Activated T-helper 2 cell treated with anti-CD3 and anti-CD28 coated beads, Interferon-gamma antibody, Interleukin-2, Interleukin-4, amounts not matched to agents 10 μg/mL and 5 μg/mL and 100 μg/mL, durations not matched to agents 14 hours and 24 hours and 36 hours (primary cell): ENCODE measurements at regions of chr5 and their contacts with region 1.

Region 1: DNA sequence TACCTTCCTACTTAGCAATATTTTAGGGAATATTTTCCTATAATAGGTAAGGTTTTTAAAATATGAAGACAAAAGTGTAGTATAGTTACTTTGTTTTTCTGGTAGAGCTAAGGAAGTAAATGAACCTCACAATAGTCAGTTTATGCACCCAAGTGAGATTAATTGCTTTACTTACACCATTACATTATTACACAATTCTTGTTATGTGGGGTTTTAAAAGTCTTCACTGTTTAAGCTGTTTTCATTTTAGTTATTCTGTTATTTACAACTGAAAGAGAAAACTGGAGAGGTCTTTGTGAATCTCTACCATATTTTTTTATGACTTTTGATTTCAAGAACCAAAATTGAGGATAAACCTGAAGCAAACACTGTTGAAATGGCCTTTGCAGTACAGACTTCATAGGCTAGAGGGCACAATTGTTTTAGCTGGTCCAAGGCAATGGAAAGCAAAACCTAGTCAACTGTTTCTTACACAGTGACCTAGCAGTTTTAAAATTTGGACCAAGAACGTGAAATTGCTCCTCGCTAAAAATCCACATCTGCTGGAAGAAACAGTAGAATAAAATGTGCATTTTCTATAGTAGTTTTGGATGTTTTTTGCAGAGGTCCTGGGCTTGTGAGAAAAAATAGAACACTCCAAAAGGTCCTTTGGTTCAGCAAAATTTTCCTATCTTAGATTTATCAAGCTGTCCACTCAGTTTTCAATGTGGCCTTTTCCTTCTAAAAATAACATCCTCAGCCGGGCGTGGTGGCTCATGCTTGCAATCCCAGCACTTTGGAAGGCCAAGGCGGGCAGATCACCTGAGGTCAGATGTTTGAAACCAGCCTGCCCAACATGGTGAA is 66.4 kb upstream of the FER start:
- DNase-seq: no peak
- H3K4me3 Mint-ChIP-seq: no peak overlapping the region
- H3K27ac Mint-ChIP-seq: no peak overlapping the region
- H3K4me1 Mint-ChIP-seq: no peaks in the 10 kb centered on the region
- H3K27me3 Mint-ChIP-seq: peaks cover 8% of the 10 kb centered on the region

Region 2: GRCh38 chr5:109439590-109439989 is 758.3 kb after region 1 on chr5:
- intact Hi-C with region 1: loop called (anchors 2 kb)
- DNase-seq: no peak
- H3K4me3 Mint-ChIP-seq: no peak overlapping the region
- H3K27ac Mint-ChIP-seq: no peak overlapping the region
- H3K4me1 Mint-ChIP-seq: no peaks in the 10 kb centered on the region
- H3K27me3 Mint-ChIP-seq: peaks cover 12% of the 10 kb centered on the region